HCT116 (cell line): ENCODE measurements at regions of chr2 and their contacts with region 1.

Region 1: GRCh38 chr2:111975053-111975552 is 76.7 kb downstream of the MERTK start:
- DNase-seq: peak; percentile 97
- ATAC-seq: peak; percentile 96
- H3K4me3 ChIP-seq: no peak overlapping the region
- H3K27ac ChIP-seq: peak overlapping the region; percentile 23; the same call in 1 of the 2 replicates
- H3K4me1 ChIP-seq: peaks cover 30 to 43% of the 10 kb centered on the region in 2 experiments
- H3K27me3 ChIP-seq: no peaks in the 10 kb centered on the region
- CTCF ChIP-seq: no peak
- POLR2A ChIP-seq: no peak
- RAD21 ChIP-seq: peak; percentile 34; the same call in 1 of the 2 replicates

Region 2: GRCh38 chr2:111946294-111947114 is 28.6 kb before region 1 on chr2:
- CTCF ChIA-PET with region 1: no interaction called
- POLR2A ChIA-PET with region 1: interaction called, 4 read pairs
- RAD21 ChIA-PET with region 1: no interaction called
- intact Hi-C with region 1: loop called (anchors 1 kb)
- DNase-seq: peak; percentile 94
- ATAC-seq: peak; percentile 91
- H3K4me3 ChIP-seq: peak overlapping the region in 1 of 2 experiments; percentile 44
- H3K27ac ChIP-seq: peak overlapping the region; percentile 59
- H3K4me1 ChIP-seq: peaks cover 24 to 26% of the 10 kb centered on the region in 2 experiments
- H3K27me3 ChIP-seq: no peaks in the 10 kb centered on the region
- CTCF ChIP-seq: no peak
- POLR2A ChIP-seq: no peak
- RAD21 ChIP-seq: peak; percentile 49

Region 3: DNA sequence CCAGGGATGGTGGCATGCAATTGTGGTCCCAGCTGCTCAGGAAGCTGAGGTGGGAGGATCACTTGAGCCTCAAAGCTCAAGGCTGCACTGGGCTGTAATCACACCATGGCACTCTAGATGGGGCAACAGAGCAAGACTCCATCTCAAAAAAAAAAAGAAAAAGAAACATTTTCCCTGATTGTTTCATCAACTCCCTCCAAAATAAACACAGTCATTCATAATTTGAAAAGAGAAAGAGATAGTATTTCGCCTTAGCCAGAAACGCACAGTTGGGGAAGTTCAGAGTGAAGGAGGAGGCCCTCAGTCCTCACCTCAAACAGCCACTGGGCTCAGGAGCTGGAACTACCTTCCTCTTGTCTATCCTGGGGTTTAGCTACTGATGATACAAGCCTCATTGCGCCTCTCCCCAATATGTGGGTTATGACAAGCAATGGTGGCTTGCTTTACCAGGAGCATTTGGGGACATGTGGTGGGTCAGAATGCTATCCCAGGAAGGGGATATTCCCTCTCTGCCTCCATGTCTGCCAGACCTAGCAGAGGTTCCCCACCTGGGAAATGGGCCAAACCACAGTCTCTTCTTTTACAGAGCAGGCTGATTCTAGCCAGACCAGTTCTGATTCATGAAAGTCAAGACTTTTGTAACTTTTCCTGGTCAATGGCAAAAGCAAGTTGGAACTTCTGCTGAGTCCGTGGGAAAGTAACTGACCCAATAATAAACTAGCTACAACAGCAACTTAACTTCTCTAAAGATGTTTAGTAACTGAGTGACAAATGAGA is 57.8 kb after region 1 on chr2:
- CTCF ChIA-PET with region 1: no interaction called
- POLR2A ChIA-PET with region 1: interaction called, 4 read pairs
- RAD21 ChIA-PET with region 1: no interaction called
- intact Hi-C with region 1: loop called (anchors 5 kb)
- DNase-seq: peak; percentile 48
- ATAC-seq: peak; percentile 82
- H3K4me3 ChIP-seq: no peak overlapping the region
- H3K27ac ChIP-seq: peak overlapping the region; percentile 17
- H3K4me1 ChIP-seq: peaks cover 29 to 30% of the 10 kb centered on the region in 2 experiments
- H3K27me3 ChIP-seq: no peaks in the 10 kb centered on the region
- CTCF ChIP-seq: peak in 1 of 3 experiments; percentile 32; a peak in 1 of 6 replicates
- POLR2A ChIP-seq: no peak
- RAD21 ChIP-seq: no peak

Region 4: GRCh38 chr2:112065966-112066365 is 90.9 kb after region 1 on chr2:
- CTCF ChIA-PET with region 1: no interaction called
- POLR2A ChIA-PET with region 1: no interaction called
- RAD21 ChIA-PET with region 1: no interaction called
- intact Hi-C with region 1: no loop called
- DNase-seq: no peak
- ATAC-seq: no peak
- H3K4me3 ChIP-seq: no peak overlapping the region
- H3K27ac ChIP-seq: no peak overlapping the region
- H3K4me1 ChIP-seq: peaks cover 0 to 4% of the 10 kb centered on the region in 2 experiments; a peak in 1 of 4 replicates
- H3K27me3 ChIP-seq: no peaks in the 10 kb centered on the region
- CTCF ChIP-seq: no peak
- POLR2A ChIP-seq: no peak
- RAD21 ChIP-seq: no peak

Region 5: DNA sequence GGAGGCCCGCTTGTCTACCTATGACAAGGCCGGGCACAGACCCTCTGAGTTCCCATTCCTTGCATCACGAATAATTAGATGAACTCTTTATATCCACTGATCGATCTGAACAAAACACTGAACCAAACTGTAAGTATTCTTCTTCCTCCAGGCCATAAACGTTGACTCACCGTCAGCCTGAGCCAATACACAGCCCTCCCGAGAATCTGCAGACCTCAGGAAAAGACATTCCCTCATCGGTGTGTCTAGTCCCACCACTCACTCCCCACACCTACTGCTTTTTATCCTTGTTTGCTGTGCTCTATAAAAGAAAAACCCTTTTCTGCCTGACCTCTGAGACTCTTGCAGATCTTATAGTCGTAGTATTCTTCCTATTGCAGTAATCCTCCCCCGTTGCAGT is 121.0 kb after region 1 on chr2:
- CTCF ChIA-PET with region 1: no interaction called
- POLR2A ChIA-PET with region 1: no interaction called
- RAD21 ChIA-PET with region 1: no interaction called
- intact Hi-C with region 1: no loop called
- DNase-seq: no peak
- ATAC-seq: no peak
- H3K4me3 ChIP-seq: no peak overlapping the region
- H3K27ac ChIP-seq: no peak overlapping the region
- H3K4me1 ChIP-seq: no peaks in the 10 kb centered on the region
- H3K27me3 ChIP-seq: no peaks in the 10 kb centered on the region
- CTCF ChIP-seq: no peak
- POLR2A ChIP-seq: no peak
- RAD21 ChIP-seq: no peak